ENCODE measurements at regions of chr3 and their contacts with region 1.

Region 1: GRCh38 chr3:125110016-125110875 is 54.4 kb upstream of the HEG1 start:
- DNase-seq: peak; percentile 88
- H3K4me3 ChIP-seq: no peak overlapping the region
- H3K27ac ChIP-seq: peak overlapping the region; percentile 32
- H3K4me1 ChIP-seq: peaks cover 46% of the 10 kb centered on the region
- H3K27me3 ChIP-seq: no peaks in the 10 kb centered on the region
- CTCF ChIP-seq: no peak

Region 2: DNA sequence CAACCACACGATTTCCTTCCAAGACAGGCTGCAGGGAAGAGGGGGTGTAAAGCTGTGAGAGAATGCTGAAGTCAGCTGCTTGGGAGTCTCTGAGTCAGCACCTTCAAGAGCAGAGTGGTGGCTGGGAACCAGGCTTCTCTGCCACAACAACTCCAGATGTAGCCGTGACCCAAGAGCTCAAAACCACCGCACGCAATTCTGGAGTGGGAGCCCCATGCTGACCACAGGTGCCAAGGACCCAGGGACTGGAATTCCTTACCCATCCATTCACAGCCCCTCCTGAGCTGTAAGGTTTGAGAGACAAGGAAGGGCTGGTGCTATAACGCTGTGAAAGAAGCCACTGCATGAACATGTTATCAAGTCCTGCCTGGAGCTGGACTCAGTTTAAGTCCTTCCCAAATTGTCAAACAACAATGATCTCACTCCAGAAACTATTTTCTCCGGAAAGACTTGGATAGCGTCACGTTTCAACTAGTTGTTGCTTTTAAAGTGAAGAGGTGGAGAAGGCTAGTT is 318.6 kb before region 1 on chr3:
- CTCF ChIA-PET with region 1: no interaction called
- dilution Hi-C with region 1: no loop called
- in situ Hi-C with region 1: no loop called
- intact Hi-C with region 1: no loop called
- DNase-seq: no peak
- H3K4me3 ChIP-seq: no peak overlapping the region
- H3K27ac ChIP-seq: no peak overlapping the region
- H3K4me1 ChIP-seq: peaks cover 23% of the 10 kb centered on the region
- H3K27me3 ChIP-seq: no peaks in the 10 kb centered on the region
- CTCF ChIP-seq: no peak

Region 3: DNA sequence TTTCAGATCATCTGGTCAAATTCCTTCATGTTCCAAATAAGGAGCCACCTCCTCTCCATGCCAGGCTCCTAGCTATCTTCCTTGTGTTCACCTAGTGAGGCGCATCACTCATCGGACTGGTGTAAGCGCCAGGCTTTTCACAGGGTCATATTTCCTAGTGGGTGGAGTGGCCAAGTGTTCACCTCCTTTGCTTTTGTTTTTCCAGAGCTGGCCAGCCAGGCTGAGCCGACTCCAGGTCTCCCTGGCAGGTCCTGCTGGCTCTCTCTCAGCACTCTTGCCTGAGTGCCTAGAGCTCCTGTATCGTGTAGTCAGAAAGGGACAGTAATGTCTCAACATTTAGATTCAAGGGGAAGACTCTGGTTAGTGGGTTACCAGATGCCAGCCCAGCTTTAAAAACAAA is 85.4 kb before region 1 on chr3:
- CTCF ChIA-PET with region 1: no interaction called
- dilution Hi-C with region 1: no loop called
- in situ Hi-C with region 1: no loop called
- intact Hi-C with region 1: no loop called
- DNase-seq: no peak
- H3K4me3 ChIP-seq: no peak overlapping the region
- H3K27ac ChIP-seq: no peak overlapping the region
- H3K4me1 ChIP-seq: no peaks in the 10 kb centered on the region
- H3K27me3 ChIP-seq: no peaks in the 10 kb centered on the region
- CTCF ChIP-seq: no peak

Region 4: GRCh38 chr3:125062888-125063618 is 47.2 kb before region 1 on chr3:
- CTCF ChIA-PET with region 1: no interaction called
- dilution Hi-C with region 1: no loop called
- in situ Hi-C with region 1: no loop called
- intact Hi-C with region 1: loop called (anchors 2 kb)
- DNase-seq: peak; percentile 91
- H3K4me3 ChIP-seq: no peak overlapping the region
- H3K27ac ChIP-seq: peak overlapping the region; percentile 41
- H3K4me1 ChIP-seq: peaks cover 37% of the 10 kb centered on the region
- H3K27me3 ChIP-seq: no peaks in the 10 kb centered on the region
- CTCF ChIP-seq: no peak

Measured in mammary epithelial cell (primary cell).